Naive thymus-derived CD4-positive, alpha-beta T cell (primary cell): ENCODE measurements at regions of chr19 and their contacts with region 1.

Region 1: DNA sequence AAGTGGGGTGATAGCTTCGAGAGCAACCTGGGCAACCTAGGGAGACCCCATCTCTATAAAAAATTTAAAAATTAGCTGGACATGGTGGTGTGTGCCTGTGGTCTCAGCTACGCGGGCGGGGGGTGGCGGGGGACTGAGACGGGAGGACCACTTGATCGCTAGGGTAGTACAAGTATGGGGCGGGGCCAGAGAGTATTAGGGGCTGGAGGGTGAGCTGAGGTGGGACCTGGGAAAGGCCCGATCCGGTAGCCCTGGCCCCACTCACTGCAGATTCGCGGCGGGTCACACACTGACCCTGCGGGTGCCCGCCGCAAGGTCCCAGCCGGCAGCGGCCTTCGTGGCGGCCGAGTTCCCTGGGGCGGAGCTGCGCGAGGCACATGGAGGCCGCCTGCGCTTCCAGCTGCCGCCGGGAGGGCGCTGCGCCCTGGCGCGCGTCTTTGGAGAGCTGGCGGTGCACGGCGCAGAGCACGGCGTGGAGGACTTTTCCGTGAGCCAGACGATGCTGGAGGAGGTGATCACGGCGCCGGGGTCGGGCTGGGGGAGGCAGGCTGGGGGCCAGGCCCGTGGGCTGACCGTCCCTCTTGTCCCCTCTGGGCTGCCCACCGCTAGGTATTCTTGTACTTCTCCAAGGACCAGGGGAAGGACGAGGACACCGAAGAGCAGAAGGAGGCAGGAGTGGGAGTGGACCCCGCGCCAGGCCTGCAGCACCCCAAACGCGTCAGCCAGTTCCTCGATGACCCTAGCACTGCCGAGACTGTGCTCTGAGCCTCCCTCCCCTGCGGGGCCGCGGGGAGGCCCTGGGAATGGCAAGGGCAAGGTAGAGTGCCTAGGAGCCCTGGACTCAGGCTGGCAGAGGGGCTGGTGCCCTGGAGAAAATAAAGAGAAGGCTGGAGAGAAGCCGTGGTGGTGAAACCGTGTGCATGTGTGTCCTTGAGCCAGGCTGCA is 2.0 kb upstream of the ARHGAP45 start:
- DNase-seq: peak; percentile 60 to 82 (median 72)
- ATAC-seq: peak; percentile 47
- H3K4me3 ChIP-seq: peak overlapping the region; percentile 27
- H3K4me3 Mint-ChIP-seq: peak overlapping the region; percentile 59 to 99 (median 68)
- H3K27ac ChIP-seq: peak overlapping the region; percentile 99
- H3K27ac Mint-ChIP-seq: peak overlapping the region; percentile 40 to 92 (median 71)
- H3K4me1 ChIP-seq: peaks cover 32 to 38% of the 10 kb centered on the region in 2 donors
- H3K4me1 Mint-ChIP-seq: peaks cover 20 to 42% (median 33%) of the 10 kb centered on the region in 7 donors
- H3K27me3 ChIP-seq: no peaks in the 10 kb centered on the region
- H3K27me3 Mint-ChIP-seq: no peaks in the 10 kb centered on the region

Region 2: DNA sequence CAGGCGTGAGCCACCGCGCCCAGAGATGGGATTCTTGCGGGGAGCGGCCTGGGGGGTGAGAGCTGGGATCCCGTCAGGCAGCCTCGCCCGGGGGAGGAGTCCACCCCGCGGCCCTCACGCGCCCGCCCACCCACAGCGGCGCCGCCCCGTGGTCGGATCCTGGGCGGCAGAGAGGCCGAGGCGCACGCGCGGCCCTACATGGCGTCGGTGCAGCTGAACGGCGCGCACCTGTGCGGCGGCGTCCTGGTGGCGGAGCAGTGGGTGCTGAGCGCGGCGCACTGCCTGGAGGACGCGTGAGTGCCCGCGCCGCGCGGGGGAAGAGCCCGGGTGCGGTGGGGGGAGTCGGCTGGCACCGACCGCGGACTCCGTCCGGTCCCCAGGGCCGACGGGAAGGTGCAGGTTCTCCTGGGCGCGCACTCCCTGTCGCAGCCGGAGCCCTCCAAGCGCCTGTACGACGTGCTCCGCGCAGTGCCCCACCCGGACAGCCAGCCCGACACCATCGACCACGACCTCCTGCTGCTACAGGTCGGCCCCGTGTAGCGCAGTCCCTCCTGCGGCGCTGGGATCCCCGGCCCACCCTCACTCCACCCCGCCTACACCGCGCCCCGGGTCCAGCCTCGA is 204.3 kb before region 1 on chr19:
- CTCF ChIA-PET with region 1: interaction called, 3 read pairs
- POLR2A ChIA-PET with region 1: no interaction called
- intact Hi-C with region 1: loop called in 1 of 2 experiments (anchors 5 kb)
- DNase-seq: peak in 8 of 9 donors; percentile 46 to 69 (median 58)
- ATAC-seq: peak; percentile 55
- H3K4me3 ChIP-seq: no peak overlapping the region
- H3K4me3 Mint-ChIP-seq: peak overlapping the region in 6 of 10 donors; percentile 17 to 64 (median 46)
- H3K27ac ChIP-seq: no peak overlapping the region
- H3K27ac Mint-ChIP-seq: no peak overlapping the region
- H3K4me1 ChIP-seq: peaks cover 14 to 23% of the 10 kb centered on the region in 2 donors
- H3K4me1 Mint-ChIP-seq: peaks cover 0 to 21% (median 16%) of the 10 kb centered on the region in 7 donors
- H3K27me3 ChIP-seq: no peaks in the 10 kb centered on the region
- H3K27me3 Mint-ChIP-seq: peaks cover 0 to 18% (median 0%) of the 10 kb centered on the region in 5 donors

Region 3: DNA sequence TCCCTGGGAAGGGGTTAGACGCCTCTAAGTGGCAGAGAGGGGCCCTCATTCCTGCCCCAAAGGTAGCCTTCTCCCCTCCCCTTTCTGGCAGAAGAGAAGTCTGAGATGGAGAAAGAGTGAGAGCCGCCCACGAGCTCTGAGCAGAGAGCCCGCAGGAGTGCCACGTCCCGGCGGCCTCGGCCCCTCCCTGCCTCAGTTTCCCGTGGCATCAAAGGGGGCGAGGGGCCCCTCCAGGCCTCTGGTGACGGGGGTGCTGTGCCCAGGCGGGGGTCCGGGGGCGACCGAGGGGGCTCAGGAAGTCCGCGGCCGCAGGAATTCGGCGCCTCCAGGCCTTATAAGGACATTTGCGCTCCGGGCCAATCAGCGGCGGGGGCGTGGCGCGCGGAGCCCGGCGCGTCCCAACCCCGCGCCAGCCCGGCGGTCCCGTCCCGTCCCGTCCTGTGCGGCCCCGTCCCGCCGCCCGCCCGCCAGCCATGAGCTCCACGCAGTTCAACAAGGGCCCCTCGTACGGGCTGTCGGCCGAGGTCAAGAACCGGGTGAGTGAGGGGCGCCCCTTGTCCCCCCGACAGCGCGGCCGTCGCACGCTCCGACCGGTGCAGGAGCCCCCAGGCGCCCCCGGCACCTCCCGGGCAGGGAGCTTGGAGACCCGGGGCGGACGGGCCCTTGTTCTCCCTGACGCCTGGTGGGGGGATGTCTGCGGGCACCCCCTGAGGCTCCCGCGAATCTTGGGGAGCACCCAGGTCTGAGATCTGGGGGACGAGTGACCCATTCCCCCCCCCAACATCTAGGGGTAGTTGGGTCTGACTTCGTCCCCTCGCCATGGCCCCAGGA is 38.5 kb before region 1 on chr19 and contains the start of gene CNN2:
- CTCF ChIA-PET with region 1: interaction called, 6 read pairs
- POLR2A ChIA-PET with region 1: interaction called, 495 read pairs
- intact Hi-C with region 1: loop called (anchors 1 to 5 kb)
- DNase-seq: peak in 8 of 9 donors; percentile 49 to 85 (median 58)
- ATAC-seq: peak; percentile 49
- H3K4me3 ChIP-seq: peak within 1 kb of the TSS; percentile 99
- H3K4me3 Mint-ChIP-seq: peak within 1 kb of the TSS; percentile 93 to 99 (median 97)
- H3K27ac ChIP-seq: peak within 1 kb of the TSS; percentile 85
- H3K27ac Mint-ChIP-seq: peak within 1 kb of the TSS; percentile 88 to 98 (median 94)
- H3K4me1 ChIP-seq: peaks cover 21 to 31% of the 10 kb centered on the region in 2 donors
- H3K4me1 Mint-ChIP-seq: peaks cover 0 to 40% (median 26%) of the 10 kb centered on the region in 7 donors
- H3K27me3 ChIP-seq: no peaks in the 10 kb centered on the region
- H3K27me3 Mint-ChIP-seq: peaks cover 0 to 5% (median 0%) of the 10 kb centered on the region in 5 donors
- total RNA-seq, gene CNN2: 234 to 440 (median 240) TPM

Region 4: GRCh38 chr19:1087813-1088415 is 23.0 kb after region 1 on chr19:
- CTCF ChIA-PET with region 1: interaction called, 11 read pairs
- POLR2A ChIA-PET with region 1: interaction called, 2,022 read pairs
- intact Hi-C with region 1: loop called (anchors 1 to 2 kb)
- DNase-seq: peak in 7 of 9 donors; percentile 65 to 71 (median 67)
- ATAC-seq: peak; percentile 72
- H3K4me3 ChIP-seq: no peak overlapping the region
- H3K4me3 Mint-ChIP-seq: peak overlapping the region; percentile 23 to 83 (median 72)
- H3K27ac ChIP-seq: peak overlapping the region; percentile 84
- H3K27ac Mint-ChIP-seq: peak overlapping the region; percentile 74 to 98 (median 93)
- H3K4me1 ChIP-seq: peaks cover 28 to 32% of the 10 kb centered on the region in 2 donors
- H3K4me1 Mint-ChIP-seq: peaks cover 26 to 59% (median 36%) of the 10 kb centered on the region in 7 donors
- H3K27me3 ChIP-seq: no peaks in the 10 kb centered on the region
- H3K27me3 Mint-ChIP-seq: no peaks in the 10 kb centered on the region

Region 5: DNA sequence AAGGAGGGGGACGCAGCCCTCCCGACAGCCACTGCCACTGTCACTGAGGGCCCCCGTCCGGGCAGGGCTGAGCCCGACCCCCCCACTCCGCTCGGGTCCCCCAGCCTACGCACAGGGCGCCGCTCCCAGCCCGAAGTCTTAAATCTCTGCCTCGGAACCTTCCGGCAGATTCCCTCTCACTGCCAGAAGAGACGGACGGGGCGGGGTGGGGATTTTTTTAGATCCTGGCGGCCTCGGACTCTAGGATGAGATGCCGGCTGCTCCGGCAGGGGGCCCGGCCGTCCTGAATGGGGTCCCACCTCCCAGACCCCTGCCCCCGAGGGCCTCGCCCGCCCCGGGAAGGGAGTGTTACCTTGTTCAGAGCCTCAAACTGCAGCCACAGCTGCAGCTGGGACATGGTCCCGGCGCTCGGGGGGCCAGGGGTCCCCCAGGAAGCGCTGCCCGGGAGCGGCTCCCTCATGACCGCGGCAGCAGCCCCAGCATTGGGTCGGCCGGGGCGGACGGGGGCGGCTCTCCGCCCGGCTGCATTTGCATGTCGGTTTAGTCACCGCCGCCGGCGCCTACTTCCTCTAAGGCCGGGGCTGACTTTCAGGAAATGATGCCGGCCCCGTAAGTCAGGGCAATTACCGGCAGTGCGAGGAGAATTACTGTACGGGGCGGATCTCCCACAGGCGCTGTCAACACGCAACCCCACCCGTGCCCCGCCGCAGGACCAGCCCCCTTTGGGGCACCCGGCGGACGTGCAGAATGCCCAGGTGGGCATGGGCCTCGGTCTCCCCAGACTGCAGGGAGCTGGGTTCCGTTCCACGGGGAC is 67.0 kb after region 1 on chr19:
- CTCF ChIA-PET with region 1: interaction called, 5 read pairs
- POLR2A ChIA-PET with region 1: interaction called, 6 read pairs
- intact Hi-C with region 1: loop called in 1 of 2 experiments (anchors 1 kb)
- DNase-seq: peak; percentile 69 to 87 (median 85)
- ATAC-seq: peak; percentile 80
- H3K4me3 ChIP-seq: peak overlapping the region; percentile 81
- H3K4me3 Mint-ChIP-seq: peak overlapping the region; percentile 78 to 94 (median 85)
- H3K27ac ChIP-seq: peak overlapping the region; percentile 98
- H3K27ac Mint-ChIP-seq: peak overlapping the region; percentile 88 to 93 (median 92)
- H3K4me1 ChIP-seq: peaks cover 23 to 42% of the 10 kb centered on the region in 2 donors
- H3K4me1 Mint-ChIP-seq: peaks cover 13 to 45% (median 29%) of the 10 kb centered on the region in 7 donors
- H3K27me3 ChIP-seq: no peaks in the 10 kb centered on the region
- H3K27me3 Mint-ChIP-seq: no peaks in the 10 kb centered on the region

Region 6: GRCh38 chr19:1249298-1249989 is 184.5 kb after region 1 on chr19:
- CTCF ChIA-PET with region 1: no interaction called
- POLR2A ChIA-PET with region 1: interaction called, 3 read pairs
- intact Hi-C with region 1: loop called in 1 of 2 experiments (anchors 2 kb)
- DNase-seq: peak; percentile 88 to 97 (median 94)
- ATAC-seq: peak; percentile 74
- H3K4me3 ChIP-seq: peak overlapping the region; percentile 63
- H3K4me3 Mint-ChIP-seq: peak overlapping the region; percentile 80 to 95 (median 88)
- H3K27ac ChIP-seq: peak overlapping the region; percentile 94
- H3K27ac Mint-ChIP-seq: peak overlapping the region; percentile 62 to 95 (median 89)
- H3K4me1 ChIP-seq: peaks cover 22 to 27% of the 10 kb centered on the region in 2 donors
- H3K4me1 Mint-ChIP-seq: peaks cover 0 to 11% (median 10%) of the 10 kb centered on the region in 7 donors
- H3K27me3 ChIP-seq: no peaks in the 10 kb centered on the region
- H3K27me3 Mint-ChIP-seq: no peaks in the 10 kb centered on the region